Mammary epithelial cell (primary cell): ENCODE measurements at regions of chrX and their contacts with region 1.

Region 1: GRCh38 chrX:50747471-50747900 is 66.5 kb downstream of the SHROOM4 start:
- DNase-seq: peak; percentile 8
- H3K4me3 ChIP-seq: no peak overlapping the region
- H3K27ac ChIP-seq: no peak overlapping the region
- H3K4me1 ChIP-seq: no peaks in the 10 kb centered on the region
- H3K27me3 ChIP-seq: peaks cover 3% of the 10 kb centered on the region
- CTCF ChIP-seq: peak; percentile 76 to 79

Region 2: GRCh38 chrX:50697691-50698090 is 49.8 kb before region 1 on chrX:
- CTCF ChIA-PET with region 1: no interaction called
- dilution Hi-C with region 1: no loop called
- in situ Hi-C with region 1: no loop called
- intact Hi-C with region 1: loop called (anchors 2 kb)
- DNase-seq: peak; percentile 55
- H3K4me3 ChIP-seq: no peak overlapping the region
- H3K27ac ChIP-seq: no peak overlapping the region
- H3K4me1 ChIP-seq: no peaks in the 10 kb centered on the region
- H3K27me3 ChIP-seq: peaks cover 6% of the 10 kb centered on the region
- CTCF ChIP-seq: no peak

Region 3: GRCh38 chrX:50813827-50814742 is 66.6 kb after region 1 on chrX and contains the start of gene SHROOM4:
- CTCF ChIA-PET with region 1: no interaction called
- dilution Hi-C with region 1: no loop called
- in situ Hi-C with region 1: no loop called
- intact Hi-C with region 1: no loop called
- DNase-seq: peak; percentile 41
- H3K4me3 ChIP-seq: peak within 1 kb of the TSS; percentile 19 to 54 (median 39)
- H3K27ac ChIP-seq: peak within 1 kb of the TSS; percentile 13
- H3K4me1 ChIP-seq: peaks cover 7% of the 10 kb centered on the region
- H3K27me3 ChIP-seq: no peaks in the 10 kb centered on the region
- CTCF ChIP-seq: no peak
- total RNA-seq, gene SHROOM4: 2.8 to 7.0 TPM

Region 4: DNA sequence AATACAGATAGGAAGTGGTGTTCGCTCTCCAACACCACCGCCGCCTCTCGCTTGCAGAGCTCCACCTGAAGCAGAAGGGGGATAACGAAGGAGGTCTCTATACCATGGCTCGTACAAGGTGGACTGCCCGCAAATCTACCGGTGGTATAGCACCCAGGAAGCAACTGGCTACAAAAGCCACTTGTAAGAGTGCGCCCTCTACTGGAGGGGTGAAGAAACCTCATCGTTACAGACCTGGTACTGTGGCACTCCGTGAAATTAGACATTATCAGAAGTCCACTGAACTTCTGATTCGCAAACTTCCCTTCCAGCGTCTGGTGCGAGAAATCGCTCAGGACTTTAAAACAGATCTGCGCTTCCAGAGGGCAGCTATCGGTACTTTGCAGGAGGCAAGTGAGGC is 157.8 kb after region 1 on chrX:
- CTCF ChIA-PET with region 1: no interaction called
- dilution Hi-C with region 1: no loop called
- in situ Hi-C with region 1: loop called (anchors 5 to 10 kb)
- intact Hi-C with region 1: loop called (anchors 1 kb)
- DNase-seq: peak; percentile 11
- H3K4me3 ChIP-seq: no peak overlapping the region
- H3K27ac ChIP-seq: no peak overlapping the region
- H3K4me1 ChIP-seq: no peaks in the 10 kb centered on the region
- H3K27me3 ChIP-seq: peaks cover 2% of the 10 kb centered on the region
- CTCF ChIP-seq: peak; percentile 43 to 58

Region 5: GRCh38 chrX:50920132-50920531 is 172.6 kb after region 1 on chrX:
- CTCF ChIA-PET with region 1: no interaction called
- dilution Hi-C with region 1: no loop called
- in situ Hi-C with region 1: no loop called
- intact Hi-C with region 1: loop called (anchors 1 kb)
- DNase-seq: peak; percentile 23
- H3K4me3 ChIP-seq: no peak overlapping the region
- H3K27ac ChIP-seq: no peak overlapping the region
- H3K4me1 ChIP-seq: no peaks in the 10 kb centered on the region
- H3K27me3 ChIP-seq: no peaks in the 10 kb centered on the region
- CTCF ChIP-seq: peak; percentile 57 to 62

Region 6: DNA sequence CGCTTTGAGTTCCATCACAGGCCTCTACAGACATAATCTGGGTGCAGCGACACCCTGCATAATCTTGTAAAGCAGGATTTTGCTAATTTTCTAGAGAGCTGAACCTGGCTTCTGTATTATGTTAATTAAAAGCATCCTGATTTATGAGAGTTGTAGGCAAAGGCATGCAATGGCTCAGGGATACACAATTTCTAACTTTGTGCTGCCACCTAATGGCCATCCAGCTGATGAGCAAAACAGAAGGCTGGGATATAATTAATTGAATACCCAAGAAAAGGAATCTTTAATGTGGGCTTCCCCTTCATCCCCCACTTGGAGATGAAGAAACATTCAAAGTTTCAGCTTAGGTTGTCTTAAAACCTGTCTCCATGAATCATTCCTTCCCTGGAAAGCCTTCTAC is 241.2 kb after region 1 on chrX:
- CTCF ChIA-PET with region 1: no interaction called
- dilution Hi-C with region 1: no loop called
- in situ Hi-C with region 1: no loop called
- intact Hi-C with region 1: loop called (anchors 2 kb)
- DNase-seq: peak; percentile 28
- H3K4me3 ChIP-seq: no peak overlapping the region
- H3K27ac ChIP-seq: no peak overlapping the region
- H3K4me1 ChIP-seq: no peaks in the 10 kb centered on the region
- H3K27me3 ChIP-seq: peaks cover 3% of the 10 kb centered on the region
- CTCF ChIP-seq: peak; percentile 60 to 67